Endothelial cell of umbilical vein (primary cell): ENCODE measurements at regions of chr5 and their contacts with region 1.

Region 1: DNA sequence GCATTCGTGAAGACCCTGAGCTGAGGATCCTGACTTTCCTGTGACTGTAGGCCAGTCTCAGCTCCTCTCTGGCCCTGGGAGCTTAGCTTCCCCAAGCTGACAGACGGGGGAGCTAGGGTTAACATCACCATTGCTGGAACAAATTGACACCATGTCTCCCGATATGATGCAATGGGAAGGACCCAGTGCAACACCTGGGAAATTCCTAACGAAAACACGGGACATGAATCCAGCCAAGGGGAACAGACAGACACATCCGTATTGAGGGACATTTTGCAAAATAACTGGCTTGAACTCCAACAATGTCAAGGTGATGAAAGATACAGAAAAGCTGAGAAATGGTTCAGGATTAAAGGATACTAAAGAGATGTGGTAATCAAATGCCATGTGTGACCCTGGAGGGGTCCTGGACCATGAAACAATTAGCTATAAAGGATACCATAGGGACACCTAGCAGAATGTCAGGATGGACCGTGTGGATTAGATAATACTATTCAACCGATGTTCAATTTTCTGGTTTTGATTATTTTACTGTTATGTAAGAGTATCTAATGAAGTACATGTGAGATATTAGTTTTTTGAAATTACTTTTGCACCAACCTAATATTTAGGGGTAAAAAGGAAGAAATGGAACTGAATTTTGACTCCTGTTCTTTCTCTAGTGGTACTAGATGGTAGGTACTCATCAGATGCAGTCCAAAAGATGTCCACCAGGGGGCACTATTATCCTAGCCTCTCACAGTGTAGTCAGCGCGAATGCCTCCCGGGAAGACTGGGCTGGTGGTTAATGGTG is 52.7 kb downstream of the NDST1 start:
- DNase-seq: peak; percentile 79
- H3K4me3 ChIP-seq: no peak overlapping the region
- H3K27ac ChIP-seq: no peak overlapping the region
- H3K4me1 ChIP-seq: no peaks in the 10 kb centered on the region
- H3K27me3 ChIP-seq: no peaks in the 10 kb centered on the region
- CTCF ChIP-seq: peak; percentile 70 to 79
- POLR2A ChIP-seq: peak; percentile 26

Region 2: GRCh38 chr5:150544611-150545219 is 15.9 kb before region 1 on chr5:
- CTCF ChIA-PET with region 1: interaction called, 10 read pairs
- POLR2A ChIA-PET with region 1: no interaction called
- dilution Hi-C with region 1: no loop called
- intact Hi-C with region 1: no loop called
- DNase-seq: peak; percentile 69
- H3K4me3 ChIP-seq: no peak overlapping the region
- H3K27ac ChIP-seq: no peak overlapping the region
- H3K4me1 ChIP-seq: peaks cover 20% of the 10 kb centered on the region
- H3K27me3 ChIP-seq: no peaks in the 10 kb centered on the region
- CTCF ChIP-seq: peak; percentile 95 to 97
- POLR2A ChIP-seq: no peak

Region 3: DNA sequence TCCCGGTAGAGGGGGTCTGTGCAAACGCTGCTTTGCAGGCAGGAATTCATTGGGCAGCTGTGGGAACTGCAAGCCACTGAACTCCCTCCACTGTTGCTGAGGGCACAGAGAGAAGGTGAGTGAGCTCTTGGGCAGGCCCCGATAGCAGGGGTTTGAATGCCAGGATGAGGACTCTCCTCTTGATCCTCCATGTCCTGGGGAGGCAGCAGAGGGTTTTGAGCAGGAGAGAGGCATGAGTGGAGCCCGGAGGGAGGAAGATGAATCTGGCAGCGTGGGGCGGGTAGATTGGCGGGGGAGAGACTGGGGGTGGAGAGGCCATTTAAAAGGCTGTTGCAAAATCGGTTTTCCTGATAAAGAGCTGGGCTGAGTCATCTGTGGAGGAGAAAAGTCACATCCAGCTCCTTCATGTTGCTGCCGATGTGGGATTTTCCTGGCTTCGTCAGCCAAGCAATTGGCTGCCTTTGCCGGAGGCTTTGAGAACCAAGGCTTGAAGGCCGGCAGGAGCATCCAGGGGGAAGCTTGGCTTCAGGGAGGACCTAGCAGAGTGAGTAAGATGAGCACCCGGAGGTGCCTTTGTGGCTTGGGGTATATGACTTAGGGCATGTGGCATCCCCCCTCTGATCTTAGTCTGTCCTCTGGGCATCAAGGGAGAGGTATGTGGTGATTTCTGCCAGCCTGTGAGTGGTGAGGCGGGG is 79.9 kb after region 1 on chr5 and contains the start of gene SYNPO:
- CTCF ChIA-PET with region 1: interaction called, 52 read pairs
- POLR2A ChIA-PET with region 1: no interaction called
- dilution Hi-C with region 1: no loop called
- intact Hi-C with region 1: loop called (anchors 1 kb)
- DNase-seq: peak; percentile 88
- H3K4me3 ChIP-seq: peak within 1 kb of the TSS; percentile 11 to 73 (median 60)
- H3K27ac ChIP-seq: peak within 1 kb of the TSS; percentile 98
- H3K4me1 ChIP-seq: peaks cover 82% of the 10 kb centered on the region
- H3K27me3 ChIP-seq: no peaks in the 10 kb centered on the region
- CTCF ChIP-seq: no peak
- POLR2A ChIP-seq: peak; percentile 91
- total RNA-seq, gene SYNPO: 93.9 and 121 TPM in 2 replicates

Region 4: GRCh38 chr5:150700594-150701293 is 140.1 kb after region 1 on chr5 and contains the start of gene RBM22:
- CTCF ChIA-PET with region 1: interaction called, 33 read pairs
- POLR2A ChIA-PET with region 1: no interaction called
- dilution Hi-C with region 1: no loop called
- intact Hi-C with region 1: loop called (anchors 1 kb)
- DNase-seq: peak; percentile 92
- H3K4me3 ChIP-seq: peak within 1 kb of the TSS; percentile 45 to 98 (median 69)
- H3K27ac ChIP-seq: peak within 1 kb of the TSS; percentile 73
- H3K4me1 ChIP-seq: peaks cover 13% of the 10 kb centered on the region
- H3K27me3 ChIP-seq: peaks cover 3 to 6% of the 10 kb centered on the region in 2 experiments
- CTCF ChIP-seq: peak; percentile 40 to 78
- POLR2A ChIP-seq: peak; percentile 93
- total RNA-seq, gene RBM22: 44.4 and 51.2 TPM in 2 replicates

Region 5: GRCh38 chr5:150778517-150779396 is 218.2 kb after region 1 on chr5 and contains the start of gene SMIM3:
- CTCF ChIA-PET with region 1: interaction called, 14 read pairs
- POLR2A ChIA-PET with region 1: no interaction called
- dilution Hi-C with region 1: no loop called
- intact Hi-C with region 1: loop called (anchors 1 kb)
- DNase-seq: peak; percentile 58
- H3K4me3 ChIP-seq: peak within 1 kb of the TSS; percentile 7 to 41 (median 40)
- H3K27ac ChIP-seq: no peak within 1 kb of the TSS
- H3K4me1 ChIP-seq: peaks cover 30% of the 10 kb centered on the region
- H3K27me3 ChIP-seq: peaks cover 30 to 43% of the 10 kb centered on the region in 2 experiments
- CTCF ChIP-seq: peak; percentile 20 to 56
- POLR2A ChIP-seq: no peak
- total RNA-seq, gene SMIM3: 0.97 and 1.0 TPM in 2 replicates

Region 6: GRCh38 chr5:150846654-150847333 is 286.2 kb after region 1 on chr5:
- CTCF ChIA-PET with region 1: interaction called, 82 read pairs
- POLR2A ChIA-PET with region 1: no interaction called
- dilution Hi-C with region 1: no loop called
- intact Hi-C with region 1: loop called (anchors 1 kb)
- DNase-seq: peak; percentile 86
- H3K4me3 ChIP-seq: no peak overlapping the region
- H3K27ac ChIP-seq: no peak overlapping the region
- H3K4me1 ChIP-seq: no peaks in the 10 kb centered on the region
- H3K27me3 ChIP-seq: peaks cover 3 to 6% of the 10 kb centered on the region in 2 experiments
- CTCF ChIP-seq: peak; percentile 20 to 41
- POLR2A ChIP-seq: no peak